ENCODE measurements at regions of chr3 and their contacts with region 1.

Region 1: GRCh38 chr3:63349583-63350521 is 71.7 kb downstream of the SYNPR start:
- DNase-seq: no peak
- ATAC-seq: peak; percentile 87
- H3K4me3 ChIP-seq: no peak overlapping the region
- H3K27ac ChIP-seq: no peak overlapping the region
- H3K4me1 ChIP-seq: no peaks in the 10 kb centered on the region
- H3K27me3 ChIP-seq: no peaks in the 10 kb centered on the region
- CTCF ChIP-seq: peak; percentile 62 to 69 (median 69)
- EP300 ChIP-seq: no peak
- POLR2A ChIP-seq: no peak
- RAD21 ChIP-seq: peak; percentile 73

Region 2: DNA sequence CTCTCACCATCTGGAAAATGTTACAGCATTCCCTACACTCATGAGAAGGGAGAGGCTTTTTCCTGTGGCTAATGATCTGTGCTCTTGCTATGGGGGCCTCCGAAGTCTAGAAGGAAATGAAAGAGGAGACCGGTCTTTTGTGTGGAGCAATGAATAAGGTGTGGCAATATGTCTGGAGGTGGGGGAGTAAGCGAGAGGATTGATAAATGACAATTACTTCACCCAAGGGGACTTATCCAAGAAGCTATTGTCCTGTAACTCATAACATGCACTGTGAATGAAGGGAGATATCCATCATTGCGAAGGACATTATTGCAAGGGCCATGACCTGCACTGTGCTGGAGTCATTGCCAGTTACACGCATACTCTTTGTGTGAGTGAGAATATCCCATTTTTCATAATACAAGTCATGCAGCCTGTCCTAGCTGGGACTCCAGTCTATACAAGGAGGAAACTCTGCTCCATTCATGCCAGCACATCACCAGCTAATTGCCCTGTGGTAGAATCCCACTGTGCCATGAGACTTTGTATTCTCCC is 109.4 kb before region 1 on chr3:
- CTCF ChIA-PET with region 1: no interaction called
- POLR2A ChIA-PET with region 1: no interaction called
- RAD21 ChIA-PET with region 1: no interaction called
- SMC1A ChIA-PET with region 1: no interaction called
- in situ Hi-C with region 1: no loop called
- intact Hi-C with region 1: no loop called
- DNase-seq: no peak
- ATAC-seq: no peak
- H3K4me3 ChIP-seq: no peak overlapping the region
- H3K27ac ChIP-seq: no peak overlapping the region
- H3K4me1 ChIP-seq: no peaks in the 10 kb centered on the region
- H3K27me3 ChIP-seq: no peaks in the 10 kb centered on the region
- CTCF ChIP-seq: no peak
- EP300 ChIP-seq: no peak
- POLR2A ChIP-seq: no peak
- RAD21 ChIP-seq: no peak

Region 3: GRCh38 chr3:63264716-63265115 is 85.1 kb before region 1 on chr3:
- CTCF ChIA-PET with region 1: no interaction called
- POLR2A ChIA-PET with region 1: no interaction called
- RAD21 ChIA-PET with region 1: no interaction called
- SMC1A ChIA-PET with region 1: no interaction called
- in situ Hi-C with region 1: no loop called
- intact Hi-C with region 1: no loop called
- DNase-seq: no peak
- ATAC-seq: no peak
- H3K4me3 ChIP-seq: no peak overlapping the region
- H3K27ac ChIP-seq: no peak overlapping the region
- H3K4me1 ChIP-seq: no peaks in the 10 kb centered on the region
- H3K27me3 ChIP-seq: no peaks in the 10 kb centered on the region
- CTCF ChIP-seq: no peak
- EP300 ChIP-seq: no peak
- POLR2A ChIP-seq: no peak
- RAD21 ChIP-seq: no peak

Region 4: DNA sequence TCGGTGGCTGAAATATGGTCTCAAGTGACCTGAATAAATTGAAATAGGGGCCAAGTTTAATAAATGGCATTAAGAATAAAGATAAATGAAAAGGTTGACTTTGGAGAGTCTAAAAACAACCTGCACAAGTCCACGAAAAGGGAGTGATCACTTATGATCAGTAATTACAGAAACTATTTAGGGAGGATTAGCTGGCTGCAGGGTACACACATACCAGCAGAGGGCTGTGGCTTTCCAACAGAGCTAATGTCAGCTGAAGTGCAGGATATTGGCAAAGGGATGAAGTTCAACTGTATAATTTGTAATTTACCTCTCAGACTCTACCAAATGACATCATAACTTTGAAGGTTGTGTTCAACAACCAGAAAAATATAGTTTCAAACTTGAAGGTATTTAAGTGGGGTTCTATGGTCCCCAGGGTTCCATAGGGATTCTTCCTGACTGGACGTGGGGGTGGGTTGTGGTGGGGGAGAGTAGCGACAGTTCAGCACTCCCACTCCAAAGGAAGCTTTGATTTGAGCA is 15.1 kb after region 1 on chr3:
- CTCF ChIA-PET with region 1: interaction called, 53 read pairs
- POLR2A ChIA-PET with region 1: no interaction called
- RAD21 ChIA-PET with region 1: no interaction called
- SMC1A ChIA-PET with region 1: interaction called, 3 read pairs
- in situ Hi-C with region 1: no loop called
- intact Hi-C with region 1: no loop called
- DNase-seq: no peak
- ATAC-seq: no peak
- H3K4me3 ChIP-seq: no peak overlapping the region
- H3K27ac ChIP-seq: no peak overlapping the region
- H3K4me1 ChIP-seq: no peaks in the 10 kb centered on the region
- H3K27me3 ChIP-seq: no peaks in the 10 kb centered on the region
- CTCF ChIP-seq: peak in 1 of 3 experiments; percentile 6; a peak in 1 of 6 replicates
- EP300 ChIP-seq: no peak
- POLR2A ChIP-seq: no peak
- RAD21 ChIP-seq: no peak

Region 5: DNA sequence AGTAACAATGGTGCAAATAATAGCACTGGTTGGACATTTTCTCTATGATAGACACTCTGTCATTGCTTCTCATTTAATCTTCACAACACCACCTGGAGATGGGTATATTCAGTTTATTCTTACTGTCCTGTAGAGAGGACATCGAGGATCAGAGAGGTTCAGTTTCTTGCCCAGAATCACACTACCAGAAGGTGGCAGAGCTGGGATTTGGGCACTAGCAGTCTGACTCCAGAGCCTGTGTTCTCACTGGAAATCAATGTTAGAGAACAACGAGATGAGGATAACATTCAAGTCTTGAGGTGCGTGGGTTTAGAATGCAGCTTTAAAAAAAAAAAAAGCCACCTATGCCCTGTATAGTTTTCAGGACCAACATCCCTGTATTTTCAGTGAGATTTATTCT is 56.0 kb after region 1 on chr3:
- CTCF ChIA-PET with region 1: no interaction called
- POLR2A ChIA-PET with region 1: no interaction called
- RAD21 ChIA-PET with region 1: no interaction called
- SMC1A ChIA-PET with region 1: no interaction called
- in situ Hi-C with region 1: no loop called
- intact Hi-C with region 1: no loop called
- DNase-seq: no peak
- ATAC-seq: no peak
- H3K4me3 ChIP-seq: no peak overlapping the region
- H3K27ac ChIP-seq: no peak overlapping the region
- H3K4me1 ChIP-seq: no peaks in the 10 kb centered on the region
- H3K27me3 ChIP-seq: no peaks in the 10 kb centered on the region
- CTCF ChIP-seq: no peak
- EP300 ChIP-seq: no peak
- POLR2A ChIP-seq: no peak
- RAD21 ChIP-seq: no peak

Region 6: DNA sequence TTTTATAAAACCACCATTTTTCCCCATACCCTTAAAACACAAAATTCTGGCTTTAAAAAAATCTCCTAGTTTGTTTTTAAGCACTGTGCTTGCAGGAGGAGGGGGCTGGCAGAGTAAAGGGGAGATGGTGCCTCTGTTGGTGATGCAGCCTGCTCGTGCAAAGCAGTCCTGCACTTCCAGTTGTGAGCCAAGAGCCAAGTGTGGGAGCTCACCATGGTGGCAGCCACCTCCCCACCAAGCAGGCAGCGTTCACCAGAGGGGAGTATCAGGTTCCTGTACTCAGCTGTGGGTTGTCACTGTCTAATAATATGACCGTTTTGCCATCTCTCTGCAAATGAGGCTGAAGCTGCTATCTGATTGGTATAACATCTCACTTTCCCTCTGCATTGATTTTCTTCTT is 93.1 kb after region 1 on chr3:
- CTCF ChIA-PET with region 1: no interaction called
- POLR2A ChIA-PET with region 1: no interaction called
- RAD21 ChIA-PET with region 1: no interaction called
- SMC1A ChIA-PET with region 1: no interaction called
- in situ Hi-C with region 1: no loop called
- intact Hi-C with region 1: no loop called
- DNase-seq: no peak
- ATAC-seq: no peak
- H3K4me3 ChIP-seq: no peak overlapping the region
- H3K27ac ChIP-seq: no peak overlapping the region
- H3K4me1 ChIP-seq: no peaks in the 10 kb centered on the region
- H3K27me3 ChIP-seq: no peaks in the 10 kb centered on the region
- CTCF ChIP-seq: no peak
- EP300 ChIP-seq: no peak
- POLR2A ChIP-seq: no peak
- RAD21 ChIP-seq: no peak

Region 7: GRCh38 chr3:63795438-63795837 is 445.6 kb after region 1 on chr3:
- CTCF ChIA-PET with region 1: interaction called, 14 read pairs
- POLR2A ChIA-PET with region 1: no interaction called
- RAD21 ChIA-PET with region 1: no interaction called
- SMC1A ChIA-PET with region 1: no interaction called
- in situ Hi-C with region 1: no loop called
- intact Hi-C with region 1: no loop called
- DNase-seq: no peak
- ATAC-seq: no peak
- H3K4me3 ChIP-seq: no peak overlapping the region
- H3K27ac ChIP-seq: no peak overlapping the region
- H3K4me1 ChIP-seq: no peaks in the 10 kb centered on the region
- H3K27me3 ChIP-seq: no peaks in the 10 kb centered on the region
- CTCF ChIP-seq: no peak
- EP300 ChIP-seq: no peak
- POLR2A ChIP-seq: no peak
- RAD21 ChIP-seq: no peak

Measured in GM12878 (cell line).